Dendritic cell treated with granulocyte-macrophage colony-stimulating factor and Interleukin-4, amounts not matched to agents 40 ng/mL and 50 ng/mL, for 4 days (primary cell): ENCODE measurements at regions of chr1 and their contacts with region 1.

Region 1: GRCh38 chr1:34852677-34853217 is 6.8 kb downstream of the SMIM12 start:
- H3K4me3 Mint-ChIP-seq: no peak overlapping the region
- H3K27ac Mint-ChIP-seq: peak overlapping the region; percentile 21
- H3K4me1 Mint-ChIP-seq: peaks cover 20% of the 10 kb centered on the region
- H3K27me3 Mint-ChIP-seq: no peaks in the 10 kb centered on the region

Region 2: DNA sequence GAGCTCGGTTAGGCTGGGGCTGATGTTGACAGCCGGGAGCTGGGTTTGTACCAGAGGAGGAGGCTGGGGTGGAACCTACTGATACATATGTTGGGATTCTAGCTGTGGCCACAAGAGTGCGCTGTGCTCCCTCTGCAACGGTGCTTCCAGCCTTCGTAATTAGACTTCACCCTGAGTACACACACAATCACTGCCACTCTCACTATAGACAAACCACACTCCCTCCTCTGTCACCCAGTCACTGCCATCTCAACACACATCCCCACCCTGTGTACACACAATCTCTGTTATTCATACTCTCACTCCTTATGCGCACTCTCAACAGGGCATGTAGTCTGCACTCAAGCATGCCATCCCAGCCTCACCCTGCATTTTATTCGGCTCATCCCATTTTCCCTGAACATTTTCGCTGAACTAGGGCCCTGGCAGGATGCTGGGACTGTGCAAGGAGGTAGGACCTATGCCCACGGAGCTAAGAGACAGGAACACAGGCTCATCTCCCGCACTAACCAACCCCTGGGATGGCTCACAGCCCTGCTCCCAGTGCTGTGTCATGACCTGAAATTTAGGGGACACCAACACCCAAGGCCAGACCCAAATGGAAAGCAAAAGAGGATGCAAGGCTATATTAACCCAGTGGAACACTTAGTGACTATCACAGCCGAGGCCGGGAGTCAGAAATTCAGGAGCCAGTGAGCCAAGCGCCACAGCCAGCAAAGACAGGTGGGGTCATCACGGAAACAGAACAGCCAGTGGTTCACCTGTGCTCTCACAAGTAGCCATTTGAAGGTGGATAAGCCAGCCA is 66.0 kb before region 1 on chr1:
- intact Hi-C with region 1: loop called (anchors 5 kb)
- H3K4me3 Mint-ChIP-seq: no peak overlapping the region
- H3K27ac Mint-ChIP-seq: no peak overlapping the region
- H3K4me1 Mint-ChIP-seq: peaks cover 5% of the 10 kb centered on the region
- H3K27me3 Mint-ChIP-seq: peaks cover 46% of the 10 kb centered on the region

Region 3: GRCh38 chr1:34865981-34866761 is 13.4 kb after region 1 on chr1:
- intact Hi-C with region 1: loop called (anchors 1 kb)
- H3K4me3 Mint-ChIP-seq: peak overlapping the region; percentile 85
- H3K27ac Mint-ChIP-seq: peak overlapping the region; percentile 87
- H3K4me1 Mint-ChIP-seq: peaks cover 33% of the 10 kb centered on the region
- H3K27me3 Mint-ChIP-seq: peaks cover 25% of the 10 kb centered on the region

Region 4: GRCh38 chr1:34946211-34946610 is 93.5 kb after region 1 on chr1:
- intact Hi-C with region 1: no loop called
- H3K4me3 Mint-ChIP-seq: no peak overlapping the region
- H3K27ac Mint-ChIP-seq: no peak overlapping the region
- H3K4me1 Mint-ChIP-seq: no peaks in the 10 kb centered on the region
- H3K27me3 Mint-ChIP-seq: peaks cover 15% of the 10 kb centered on the region